HepG2 (cell line): ENCODE measurements at regions of chr3 and their contacts with region 1.

Region 1: GRCh38 chr3:53255775-53256703 is at the start of gene TKT:
- DNase-seq: peak; percentile 63
- ATAC-seq: peak; percentile 65
- H3K4me3 ChIP-seq: peak within 1 kb of the TSS; percentile 89 to 97 (median 93)
- H3K27ac ChIP-seq: peak within 1 kb of the TSS; percentile 63
- H3K4me1 ChIP-seq: peaks cover 84% of the 10 kb centered on the region
- H3K27me3 ChIP-seq: no peaks in the 10 kb centered on the region; a peak in 1 of 5 replicates
- CTCF ChIP-seq: no peak
- EP300 ChIP-seq: no peak
- POLR2A ChIP-seq: peak; percentile 84 to 96
- RAD21 ChIP-seq: 0 out of 2 replicates have a peak, but pooled peaks have one; percentile 4
- total RNA-seq, gene TKT: 196 and 238 TPM in 2 replicates

Region 2: GRCh38 chr3:53219895-53220483 is 36.0 kb before region 1 on chr3:
- CTCF ChIA-PET with region 1: no interaction called
- POLR2A ChIA-PET with region 1: no interaction called
- in situ Hi-C with region 1: no loop called
- intact Hi-C with region 1: loop called (anchors 5 kb)
- DNase-seq: peak; percentile 76
- ATAC-seq: peak; percentile 78
- H3K4me3 ChIP-seq: no peak overlapping the region
- H3K27ac ChIP-seq: no peak overlapping the region
- H3K4me1 ChIP-seq: peaks cover 37% of the 10 kb centered on the region
- H3K27me3 ChIP-seq: no peaks in the 10 kb centered on the region
- CTCF ChIP-seq: peak; percentile 97
- EP300 ChIP-seq: no peak
- POLR2A ChIP-seq: no peak
- RAD21 ChIP-seq: peak; percentile 87

Region 3: DNA sequence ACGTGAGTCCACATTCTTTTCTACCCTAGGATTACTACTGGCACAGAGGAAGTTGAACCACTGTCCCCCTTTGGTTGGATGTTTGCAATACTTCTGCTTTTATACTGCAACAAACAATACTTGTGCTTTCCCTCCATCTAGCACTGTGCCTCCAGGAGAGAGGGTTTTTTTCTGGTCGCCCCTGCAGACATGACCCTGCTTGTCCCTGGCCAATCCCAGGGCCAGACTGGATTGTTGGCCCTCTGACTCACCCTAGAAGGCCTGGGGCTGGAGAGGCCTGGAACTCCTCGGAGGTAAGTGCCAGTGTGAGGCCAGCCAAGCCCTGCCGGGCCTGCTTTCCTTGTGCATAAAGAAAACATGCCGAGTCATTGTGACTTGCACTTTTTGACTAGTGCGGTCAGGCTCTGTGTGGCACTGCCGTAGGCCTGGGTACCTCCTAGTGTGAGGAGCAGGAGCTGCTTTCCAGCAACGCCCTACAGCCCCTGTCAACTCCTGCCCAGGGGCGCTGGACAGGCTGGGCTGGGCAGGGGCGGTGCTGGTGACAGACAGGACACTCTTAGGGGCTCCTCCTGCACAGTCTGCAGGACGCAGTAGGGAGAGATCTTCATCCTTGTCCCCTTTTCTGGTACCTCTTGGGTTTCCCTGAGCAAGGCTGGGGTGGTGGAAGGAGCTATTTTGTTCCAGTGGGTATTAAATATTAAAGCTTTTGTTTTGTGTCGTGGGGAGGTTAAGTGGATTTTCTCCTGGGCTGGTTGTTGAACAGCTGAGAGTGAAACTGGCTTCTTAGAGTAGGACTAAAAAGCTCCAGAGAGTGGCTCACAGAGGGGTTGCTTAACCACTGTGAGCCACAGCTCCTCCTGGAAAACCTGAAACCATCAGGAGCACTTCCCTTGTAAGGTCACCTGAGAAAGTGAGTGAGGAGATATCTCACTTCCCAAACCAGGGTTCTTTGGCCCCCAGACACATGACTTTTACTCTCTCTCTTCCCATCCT is 14.1 kb after region 1 on chr3:
- CTCF ChIA-PET with region 1: no interaction called
- POLR2A ChIA-PET with region 1: interaction called, 11 read pairs
- in situ Hi-C with region 1: no loop called
- intact Hi-C with region 1: no loop called
- DNase-seq: peak; percentile 97
- ATAC-seq: peak; percentile 94
- H3K4me3 ChIP-seq: peak overlapping the region; percentile 9 to 59 (median 33); a peak in 5 of 6 replicates
- H3K27ac ChIP-seq: peak overlapping the region; percentile 73
- H3K4me1 ChIP-seq: peaks cover 49% of the 10 kb centered on the region
- H3K27me3 ChIP-seq: no peaks in the 10 kb centered on the region
- CTCF ChIP-seq: peak; percentile 33
- EP300 ChIP-seq: peak; percentile 30 to 67; a peak in 1 of 4 replicates
- POLR2A ChIP-seq: peak; percentile 61 to 65; a peak in 3 of 4 replicates
- RAD21 ChIP-seq: peak; percentile 13; the same call in 1 of the 2 replicates

Region 4: GRCh38 chr3:53287131-53287629 is 31.1 kb after region 1 on chr3:
- CTCF ChIA-PET with region 1: no interaction called
- POLR2A ChIA-PET with region 1: no interaction called
- in situ Hi-C with region 1: no loop called
- intact Hi-C with region 1: no loop called
- DNase-seq: no peak
- ATAC-seq: no peak
- H3K4me3 ChIP-seq: no peak overlapping the region
- H3K27ac ChIP-seq: no peak overlapping the region
- H3K4me1 ChIP-seq: no peaks in the 10 kb centered on the region
- H3K27me3 ChIP-seq: no peaks in the 10 kb centered on the region
- CTCF ChIP-seq: no peak
- EP300 ChIP-seq: no peak
- POLR2A ChIP-seq: no peak
- RAD21 ChIP-seq: no peak